MCF 10A (cell line): ENCODE measurements at regions of chr18 and their contacts with region 1.

Region 1: GRCh38 chr18:59402432-59403090 is 43.5 kb upstream of the LMAN1 start:
- DNase-seq: peak; percentile 87
- H3K4me3 Mint-ChIP-seq: no peak overlapping the region
- H3K27ac Mint-ChIP-seq: no peak overlapping the region
- H3K4me1 Mint-ChIP-seq: no peaks in the 10 kb centered on the region
- H3K27me3 Mint-ChIP-seq: no peaks in the 10 kb centered on the region
- CTCF ChIP-seq: peak; percentile 98

Region 2: DNA sequence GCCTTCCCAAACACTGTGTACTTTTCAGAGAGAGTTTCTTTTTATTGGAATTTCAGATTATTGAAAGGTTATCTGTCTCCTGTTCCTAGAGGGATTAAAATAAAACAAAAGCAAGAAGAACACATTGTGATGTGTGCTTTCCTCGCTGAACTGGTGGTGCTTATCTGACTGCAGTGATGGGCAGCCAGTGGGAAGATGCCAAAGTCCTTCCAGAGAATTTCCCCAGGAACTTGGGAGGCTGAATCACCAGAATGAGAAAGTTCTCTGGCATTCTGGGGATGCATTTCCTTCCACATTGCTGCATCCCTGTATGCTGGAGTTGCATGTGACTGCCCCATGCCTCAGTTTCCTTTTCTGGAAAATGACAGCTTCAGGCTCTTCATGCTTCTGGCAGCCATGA is 316.8 kb before region 1 on chr18:
- CTCF ChIA-PET with region 1: interaction called, 39 read pairs
- POLR2A ChIA-PET with region 1: no interaction called
- intact Hi-C with region 1: loop called (anchors 5 kb)
- DNase-seq: no peak
- H3K4me3 Mint-ChIP-seq: no peak overlapping the region
- H3K27ac Mint-ChIP-seq: no peak overlapping the region
- H3K4me1 Mint-ChIP-seq: peaks cover 5% of the 10 kb centered on the region
- H3K27me3 Mint-ChIP-seq: peaks cover 70% of the 10 kb centered on the region
- CTCF ChIP-seq: no peak

Region 3: DNA sequence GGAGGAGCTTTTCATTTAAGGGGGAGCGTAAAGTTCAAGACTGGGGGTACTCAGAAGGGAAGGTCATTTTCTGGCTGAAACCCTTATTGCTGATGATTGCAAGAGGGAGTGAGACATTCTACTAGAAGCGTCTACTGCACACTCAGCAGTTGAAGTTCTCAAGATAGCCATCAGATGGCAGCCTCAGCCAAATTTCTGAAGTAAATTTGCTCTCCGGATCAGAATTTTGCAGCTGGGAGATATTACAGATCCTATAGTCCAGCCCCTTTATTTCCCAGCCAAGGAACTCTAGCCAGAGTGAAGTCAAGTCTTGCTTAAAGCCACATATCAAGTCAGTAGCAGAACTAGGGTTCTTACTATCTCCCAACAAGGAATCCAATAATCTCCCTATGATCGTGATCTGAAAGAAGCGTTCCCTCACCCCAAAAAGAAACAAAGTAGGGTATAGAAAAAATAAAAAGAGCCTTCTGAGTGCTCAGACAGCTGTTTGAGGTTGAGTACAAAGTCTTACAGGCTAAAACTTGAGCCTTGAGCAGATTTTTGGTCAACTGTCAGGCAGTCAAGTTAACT is 153.3 kb before region 1 on chr18:
- CTCF ChIA-PET with region 1: interaction called, 171 read pairs
- POLR2A ChIA-PET with region 1: interaction called, 10 read pairs
- intact Hi-C with region 1: loop called (anchors 2 kb)
- DNase-seq: peak; percentile 60
- H3K4me3 Mint-ChIP-seq: no peak overlapping the region
- H3K27ac Mint-ChIP-seq: no peak overlapping the region
- H3K4me1 Mint-ChIP-seq: no peaks in the 10 kb centered on the region
- H3K27me3 Mint-ChIP-seq: peaks cover 76% of the 10 kb centered on the region
- CTCF ChIP-seq: peak; percentile 93

Region 4: GRCh38 chr18:59308248-59308937 is 94.2 kb before region 1 on chr18:
- CTCF ChIA-PET with region 1: interaction called, 88 read pairs
- POLR2A ChIA-PET with region 1: interaction called, 4 read pairs
- intact Hi-C with region 1: loop called (anchors 2 kb)
- DNase-seq: peak; percentile 72
- H3K4me3 Mint-ChIP-seq: peak overlapping the region; percentile 28
- H3K27ac Mint-ChIP-seq: no peak overlapping the region
- H3K4me1 Mint-ChIP-seq: no peaks in the 10 kb centered on the region
- H3K27me3 Mint-ChIP-seq: peaks cover 30% of the 10 kb centered on the region
- CTCF ChIP-seq: peak; percentile 77

Region 5: DNA sequence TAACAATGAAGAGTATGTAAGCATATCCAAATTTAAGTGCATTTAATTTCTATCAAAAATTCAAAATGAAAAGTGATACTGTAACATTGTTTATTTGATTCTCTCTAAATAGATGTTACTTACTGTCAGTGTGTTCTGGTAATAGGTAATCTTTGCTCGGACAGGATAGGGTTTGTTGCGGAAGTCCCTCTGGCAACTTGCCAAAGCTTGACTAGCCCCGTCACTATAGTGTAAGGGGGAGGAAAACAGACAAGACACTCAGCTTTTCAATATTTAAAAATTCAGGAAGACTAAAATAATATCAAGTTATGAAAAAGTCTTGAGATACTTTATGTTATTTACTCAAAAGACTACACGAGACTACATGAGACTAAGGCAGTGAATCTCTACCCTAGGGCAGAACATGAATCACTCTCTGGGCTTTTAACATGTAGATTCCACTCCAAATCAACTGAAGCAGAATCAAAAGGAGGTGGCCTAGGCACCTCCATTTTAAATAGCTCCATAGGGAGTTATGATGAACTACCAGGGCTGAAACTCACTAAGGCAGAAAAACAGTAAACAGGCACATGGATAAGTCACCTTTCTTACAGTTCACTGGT is 49.4 kb before region 1 on chr18:
- CTCF ChIA-PET with region 1: interaction called, 16 read pairs
- POLR2A ChIA-PET with region 1: interaction called, 10 read pairs
- intact Hi-C with region 1: no loop called
- DNase-seq: peak; percentile 37
- H3K4me3 Mint-ChIP-seq: no peak overlapping the region
- H3K27ac Mint-ChIP-seq: no peak overlapping the region
- H3K4me1 Mint-ChIP-seq: peaks cover 11% of the 10 kb centered on the region
- H3K27me3 Mint-ChIP-seq: no peaks in the 10 kb centered on the region
- CTCF ChIP-seq: no peak

Region 6: GRCh38 chr18:59419386-59419785 is 16.8 kb after region 1 on chr18:
- CTCF ChIA-PET with region 1: interaction called, 11 read pairs
- POLR2A ChIA-PET with region 1: no interaction called
- intact Hi-C with region 1: no loop called
- DNase-seq: peak; percentile 16
- H3K4me3 Mint-ChIP-seq: no peak overlapping the region
- H3K27ac Mint-ChIP-seq: no peak overlapping the region
- H3K4me1 Mint-ChIP-seq: no peaks in the 10 kb centered on the region
- H3K27me3 Mint-ChIP-seq: peaks cover 33% of the 10 kb centered on the region
- CTCF ChIP-seq: no peak

Region 7: GRCh38 chr18:60543646-60544045 is 1141.1 kb after region 1 on chr18:
- CTCF ChIA-PET with region 1: no interaction called
- POLR2A ChIA-PET with region 1: no interaction called
- intact Hi-C with region 1: no loop called
- DNase-seq: no peak
- H3K4me3 Mint-ChIP-seq: no peak overlapping the region
- H3K27ac Mint-ChIP-seq: no peak overlapping the region
- H3K4me1 Mint-ChIP-seq: no peaks in the 10 kb centered on the region
- H3K27me3 Mint-ChIP-seq: peaks cover 80% of the 10 kb centered on the region
- CTCF ChIP-seq: no peak